ENCODE measurements at regions of chrX and their contacts with region 1.

Region 1: GRCh38 chrX:43958529-43958928 is 14.7 kb downstream of the NDP start:
- DNase-seq: peak in 1 of 2 donors; percentile 74
- ATAC-seq: peak; percentile 64 to 90 (median 88)
- H3K4me3 ChIP-seq: no peak overlapping the region
- H3K4me3 Mint-ChIP-seq: no peak overlapping the region
- H3K27ac ChIP-seq: no peak overlapping the region
- H3K27ac Mint-ChIP-seq: no peak overlapping the region
- H3K4me1 ChIP-seq: no peaks in the 10 kb centered on the region
- H3K4me1 Mint-ChIP-seq: peaks cover 5 to 7% of the 10 kb centered on the region in 2 donors
- H3K27me3 ChIP-seq: no peaks in the 10 kb centered on the region
- H3K27me3 Mint-ChIP-seq: peaks cover 3 to 40% of the 10 kb centered on the region in 2 donors
- CTCF ChIP-seq: peak; percentile 75

Region 2: DNA sequence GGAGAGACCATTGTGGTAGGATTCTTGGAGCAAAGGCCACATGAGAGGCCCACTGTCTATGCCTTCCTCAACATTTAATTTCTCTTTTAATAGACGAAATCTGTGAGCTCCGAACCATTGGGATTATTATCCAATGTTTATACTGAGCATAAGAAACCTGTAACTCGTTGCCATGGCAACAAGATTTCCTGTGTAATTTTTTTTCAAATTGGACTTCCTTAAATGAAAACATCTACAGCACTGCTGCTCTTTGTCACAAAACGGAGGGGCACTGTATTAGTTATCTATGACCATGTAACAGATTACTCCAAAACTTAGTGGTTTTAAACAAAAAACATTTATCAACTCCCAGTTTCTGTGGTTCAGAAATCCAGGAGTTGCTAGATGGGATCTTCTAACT is 1219.3 kb before region 1 on chrX:
- intact Hi-C with region 1: no loop called
- DNase-seq: peak in 1 of 2 donors; percentile 52
- ATAC-seq: no peak
- H3K4me3 ChIP-seq: no peak overlapping the region
- H3K4me3 Mint-ChIP-seq: no peak overlapping the region
- H3K27ac ChIP-seq: peak overlapping the region; percentile 45
- H3K27ac Mint-ChIP-seq: no peak overlapping the region
- H3K4me1 ChIP-seq: peaks cover 6% of the 10 kb centered on the region
- H3K4me1 Mint-ChIP-seq: peaks cover 0 to 5% of the 10 kb centered on the region in 2 donors
- H3K27me3 ChIP-seq: no peaks in the 10 kb centered on the region
- H3K27me3 Mint-ChIP-seq: peaks cover 0 to 7% of the 10 kb centered on the region in 2 donors
- CTCF ChIP-seq: no peak

Region 3: GRCh38 chrX:44025555-44025954 is 67.0 kb after region 1 on chrX:
- intact Hi-C with region 1: loop called (anchors 1 kb)
- DNase-seq: no peak
- ATAC-seq: no peak
- H3K4me3 ChIP-seq: no peak overlapping the region
- H3K4me3 Mint-ChIP-seq: no peak overlapping the region
- H3K27ac ChIP-seq: no peak overlapping the region
- H3K27ac Mint-ChIP-seq: peak overlapping the region in 1 of 2 donors; percentile 16
- H3K4me1 ChIP-seq: peaks cover 6% of the 10 kb centered on the region
- H3K4me1 Mint-ChIP-seq: peaks cover 12 to 18% of the 10 kb centered on the region in 2 donors
- H3K27me3 ChIP-seq: no peaks in the 10 kb centered on the region
- H3K27me3 Mint-ChIP-seq: peaks cover 0 to 27% of the 10 kb centered on the region in 2 donors
- CTCF ChIP-seq: no peak

Region 4: DNA sequence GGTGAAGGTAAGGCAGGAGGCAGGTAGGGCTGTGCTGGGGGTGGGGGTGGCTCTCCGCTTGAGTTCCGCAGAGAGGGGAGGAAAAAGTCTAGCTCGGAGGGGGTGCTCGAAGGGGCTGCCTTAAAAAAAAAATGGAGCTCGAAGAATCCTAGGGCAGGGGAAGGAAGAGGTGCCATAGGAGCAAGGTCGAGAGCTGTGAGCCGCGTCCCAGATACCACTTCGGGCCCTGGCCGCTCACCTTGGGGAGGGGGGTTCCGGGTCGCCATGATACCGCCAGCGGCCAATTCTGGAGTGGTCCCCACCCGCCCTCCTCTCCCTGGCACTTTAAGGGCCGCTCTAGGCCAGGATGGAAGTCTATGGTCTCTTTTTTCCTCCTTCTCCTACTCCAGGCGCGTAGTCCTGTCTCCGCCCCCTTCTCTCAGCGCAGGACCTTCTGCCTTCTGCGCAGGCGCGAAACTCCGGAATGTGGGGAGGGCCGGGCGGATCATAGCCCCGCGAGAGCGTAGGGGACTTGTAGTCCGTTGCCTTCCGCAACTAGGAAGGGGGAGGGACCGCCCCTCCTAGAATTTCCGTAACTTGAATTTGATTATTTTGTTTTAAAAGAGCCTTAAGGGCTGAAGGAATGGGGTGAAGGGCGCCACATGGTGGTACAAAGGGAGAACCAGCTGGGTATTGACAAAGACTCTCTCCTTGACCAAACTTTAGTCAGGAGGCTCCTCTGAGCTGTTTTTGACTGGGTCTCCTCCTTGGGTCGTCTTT is 584.2 kb after region 1 on chrX and contains the start of gene FUNDC1:
- intact Hi-C with region 1: loop called (anchors 2 kb)
- DNase-seq: peak; percentile 80 to 94
- ATAC-seq: peak; percentile 97 to 98 (median 97)
- H3K4me3 ChIP-seq: peak within 1 kb of the TSS; percentile 98
- H3K4me3 Mint-ChIP-seq: peak within 1 kb of the TSS; percentile 93
- H3K27ac ChIP-seq: peak within 1 kb of the TSS; percentile 76
- H3K27ac Mint-ChIP-seq: peak within 1 kb of the TSS; percentile 73 to 88
- H3K4me1 ChIP-seq: peaks cover 13% of the 10 kb centered on the region
- H3K4me1 Mint-ChIP-seq: peaks cover 15 to 19% of the 10 kb centered on the region in 2 donors
- H3K27me3 ChIP-seq: no peaks in the 10 kb centered on the region
- H3K27me3 Mint-ChIP-seq: no peaks in the 10 kb centered on the region
- CTCF ChIP-seq: peak; percentile 11
- total RNA-seq, gene FUNDC1: 6.1 to 10.6 (median 6.5) TPM